Calu3 (cell line): ENCODE measurements at regions of chr1 and their contacts with region 1.

Region 1: DNA sequence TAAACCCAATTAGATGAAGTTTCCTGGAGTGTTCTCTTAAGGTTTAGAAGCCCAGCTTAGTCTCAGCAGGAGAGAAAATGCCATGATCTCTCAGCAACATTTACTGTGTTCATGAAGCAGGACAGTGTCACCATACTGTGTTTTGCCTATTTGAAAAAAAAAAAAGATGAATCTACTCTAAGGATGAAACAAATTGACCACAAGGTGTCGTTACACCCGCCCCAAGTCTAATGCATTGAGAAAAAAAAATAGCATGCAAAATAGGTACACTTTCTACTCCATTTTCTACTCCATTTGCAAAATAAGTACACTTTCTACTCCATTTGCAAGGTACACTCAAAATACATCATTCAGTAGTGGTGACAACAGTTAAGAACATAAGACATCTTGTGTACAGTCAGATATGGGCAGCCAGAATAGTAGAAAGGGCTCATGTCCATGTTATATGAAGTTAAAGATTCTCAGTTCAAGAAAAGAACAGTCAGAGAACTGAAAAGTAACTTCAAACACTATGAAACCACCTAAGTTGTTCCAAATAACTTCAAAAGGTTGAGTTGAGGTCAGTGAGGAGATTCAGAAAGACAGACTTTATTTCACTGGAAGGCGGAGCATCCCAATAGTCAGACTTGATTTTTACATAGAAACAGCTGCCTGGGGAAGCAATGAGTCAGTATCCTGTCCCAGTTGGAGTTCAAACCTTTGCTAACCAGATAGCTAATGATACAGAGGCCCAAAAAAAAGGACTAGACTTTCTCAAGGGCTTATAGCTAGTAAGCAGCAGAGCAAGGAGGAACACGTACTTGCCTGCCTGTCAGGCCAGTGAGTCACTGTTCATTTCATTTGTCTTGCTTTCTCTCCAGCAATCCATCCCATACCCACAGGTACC is 13.3 kb downstream of the PLPPR5 start:
- DNase-seq: peak; percentile 16
- H3K4me3 Mint-ChIP-seq: no peak overlapping the region
- H3K27ac Mint-ChIP-seq: no peak overlapping the region
- H3K4me1 Mint-ChIP-seq: no peaks in the 10 kb centered on the region
- H3K27me3 Mint-ChIP-seq: no peaks in the 10 kb centered on the region
- CTCF ChIP-seq: no peak

Region 2: DNA sequence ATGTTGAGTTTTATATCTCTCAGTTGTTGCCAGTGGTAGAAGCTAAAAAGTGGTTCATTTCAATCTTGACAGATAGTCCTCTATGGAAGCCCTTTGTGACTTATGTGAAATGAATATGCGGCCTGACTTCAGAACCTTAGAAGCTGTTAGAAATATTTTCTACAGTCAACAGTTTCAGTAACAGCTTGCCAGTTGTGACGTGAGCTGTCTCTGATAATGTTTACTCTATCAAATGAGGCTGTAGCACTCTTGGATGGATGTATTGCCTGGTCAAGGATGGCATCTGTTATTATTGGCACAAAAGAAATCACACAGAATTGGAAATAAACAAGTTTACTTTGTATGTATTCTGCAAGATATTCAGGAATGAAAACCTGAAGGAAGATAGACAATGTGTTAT is 298.0 kb before region 1 on chr1:
- CTCF ChIA-PET with region 1: no interaction called
- intact Hi-C with region 1: no loop called
- DNase-seq: no peak
- H3K4me3 Mint-ChIP-seq: no peak overlapping the region
- H3K27ac Mint-ChIP-seq: no peak overlapping the region
- H3K4me1 Mint-ChIP-seq: no peaks in the 10 kb centered on the region
- H3K27me3 Mint-ChIP-seq: no peaks in the 10 kb centered on the region
- CTCF ChIP-seq: no peak

Region 3: GRCh38 chr1:98975113-98975512 is 16.3 kb before region 1 on chr1:
- CTCF ChIA-PET with region 1: no interaction called
- intact Hi-C with region 1: no loop called
- DNase-seq: no peak
- H3K4me3 Mint-ChIP-seq: no peak overlapping the region
- H3K27ac Mint-ChIP-seq: no peak overlapping the region
- H3K4me1 Mint-ChIP-seq: no peaks in the 10 kb centered on the region
- H3K27me3 Mint-ChIP-seq: no peaks in the 10 kb centered on the region
- CTCF ChIP-seq: no peak

Region 4: GRCh38 chr1:99170516-99170915 is 179.1 kb after region 1 on chr1:
- CTCF ChIA-PET with region 1: no interaction called
- intact Hi-C with region 1: loop called (anchors 5 kb)
- DNase-seq: no peak
- H3K4me3 Mint-ChIP-seq: peak overlapping the region; percentile 50
- H3K27ac Mint-ChIP-seq: peak overlapping the region; percentile 27
- H3K4me1 Mint-ChIP-seq: peaks cover 44% of the 10 kb centered on the region
- H3K27me3 Mint-ChIP-seq: no peaks in the 10 kb centered on the region
- CTCF ChIP-seq: no peak

Region 5: GRCh38 chr1:99707535-99708142 is 716.3 kb after region 1 on chr1:
- CTCF ChIA-PET with region 1: no interaction called
- intact Hi-C with region 1: loop called (anchors 2 kb)
- DNase-seq: peak; percentile 60
- H3K4me3 Mint-ChIP-seq: no peak overlapping the region
- H3K27ac Mint-ChIP-seq: no peak overlapping the region
- H3K4me1 Mint-ChIP-seq: no peaks in the 10 kb centered on the region
- H3K27me3 Mint-ChIP-seq: no peaks in the 10 kb centered on the region
- CTCF ChIP-seq: peak; percentile 37